Naive thymus-derived CD8-positive, alpha-beta T cell (primary cell): ENCODE measurements at regions of chr7 and their contacts with region 1.

Region 1: GRCh38 chr7:44490351-44491200 is at the start of gene NUDCD3:
- DNase-seq: peak; percentile 57 to 89 (median 82)
- ATAC-seq: peak; percentile 80 to 81
- H3K4me3 Mint-ChIP-seq: peak within 1 kb of the TSS; percentile 83 to 99 (median 94)
- H3K27ac Mint-ChIP-seq: peak within 1 kb of the TSS; percentile 89 to 100 (median 97)
- H3K4me1 Mint-ChIP-seq: peaks cover 30 to 51% (median 48%) of the 10 kb centered on the region in 4 donors
- H3K27me3 Mint-ChIP-seq: peaks cover 0 to 5% (median 2%) of the 10 kb centered on the region in 5 donors
- polyA plus RNA-seq, gene NUDCD3: 54.6 to 69.4 (median 59.6) TPM

Region 2: GRCh38 chr7:44200647-44201461 is 289.7 kb before region 1 on chr7 and contains the start of gene YKT6:
- POLR2A ChIA-PET with region 1: interaction called, 10 read pairs
- DNase-seq: peak; percentile 83 to 97 (median 92)
- ATAC-seq: peak; percentile 97 to 99
- H3K4me3 Mint-ChIP-seq: peak within 1 kb of the TSS; percentile 78 to 92 (median 84)
- H3K27ac Mint-ChIP-seq: peak within 1 kb of the TSS; percentile 23 to 91 (median 76)
- H3K4me1 Mint-ChIP-seq: peaks cover 22 to 38% (median 28%) of the 10 kb centered on the region in 4 donors
- H3K27me3 Mint-ChIP-seq: peaks cover 0 to 5% (median 0%) of the 10 kb centered on the region in 5 donors
- polyA plus RNA-seq, gene YKT6: 31.6 to 37.0 (median 34.2) TPM

Region 3: GRCh38 chr7:44257618-44258422 is 232.8 kb before region 1 on chr7:
- POLR2A ChIA-PET with region 1: interaction called, 16 read pairs
- DNase-seq: peak; percentile 12 to 75 (median 60)
- ATAC-seq: peak; percentile 90 to 92
- H3K4me3 Mint-ChIP-seq: peak overlapping the region; percentile 49 to 85 (median 72)
- H3K27ac Mint-ChIP-seq: peak overlapping the region; percentile 77 to 97 (median 96)
- H3K4me1 Mint-ChIP-seq: peaks cover 21 to 38% (median 31%) of the 10 kb centered on the region in 4 donors
- H3K27me3 Mint-ChIP-seq: no peaks in the 10 kb centered on the region

Region 4: DNA sequence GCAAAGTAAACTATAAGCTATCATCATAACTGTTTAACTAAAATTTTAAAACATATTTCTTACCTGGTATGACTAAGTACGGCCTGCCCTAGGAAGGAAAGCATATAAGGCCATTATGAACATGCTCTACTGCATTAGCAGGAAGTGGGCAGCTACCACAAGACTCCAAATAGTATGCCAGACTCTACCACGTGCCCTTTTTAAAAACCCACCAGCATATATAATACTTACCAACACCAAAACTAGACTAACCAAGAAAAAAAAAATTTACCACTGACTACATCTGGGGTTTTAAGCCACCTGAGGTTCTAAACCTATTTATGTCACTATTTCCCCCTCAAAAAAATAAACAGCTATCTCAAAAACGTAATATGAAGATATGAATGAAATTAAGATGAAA is 30.3 kb before region 1 on chr7:
- POLR2A ChIA-PET with region 1: interaction called, 37 read pairs
- DNase-seq: peak; percentile 26 to 93 (median 71)
- ATAC-seq: peak; percentile 99
- H3K4me3 Mint-ChIP-seq: peak overlapping the region; percentile 36 to 79 (median 71)
- H3K27ac Mint-ChIP-seq: peak overlapping the region; percentile 5 to 98 (median 87)
- H3K4me1 Mint-ChIP-seq: peaks cover 29 to 83% (median 81%) of the 10 kb centered on the region in 4 donors
- H3K27me3 Mint-ChIP-seq: no peaks in the 10 kb centered on the region

Region 5: DNA sequence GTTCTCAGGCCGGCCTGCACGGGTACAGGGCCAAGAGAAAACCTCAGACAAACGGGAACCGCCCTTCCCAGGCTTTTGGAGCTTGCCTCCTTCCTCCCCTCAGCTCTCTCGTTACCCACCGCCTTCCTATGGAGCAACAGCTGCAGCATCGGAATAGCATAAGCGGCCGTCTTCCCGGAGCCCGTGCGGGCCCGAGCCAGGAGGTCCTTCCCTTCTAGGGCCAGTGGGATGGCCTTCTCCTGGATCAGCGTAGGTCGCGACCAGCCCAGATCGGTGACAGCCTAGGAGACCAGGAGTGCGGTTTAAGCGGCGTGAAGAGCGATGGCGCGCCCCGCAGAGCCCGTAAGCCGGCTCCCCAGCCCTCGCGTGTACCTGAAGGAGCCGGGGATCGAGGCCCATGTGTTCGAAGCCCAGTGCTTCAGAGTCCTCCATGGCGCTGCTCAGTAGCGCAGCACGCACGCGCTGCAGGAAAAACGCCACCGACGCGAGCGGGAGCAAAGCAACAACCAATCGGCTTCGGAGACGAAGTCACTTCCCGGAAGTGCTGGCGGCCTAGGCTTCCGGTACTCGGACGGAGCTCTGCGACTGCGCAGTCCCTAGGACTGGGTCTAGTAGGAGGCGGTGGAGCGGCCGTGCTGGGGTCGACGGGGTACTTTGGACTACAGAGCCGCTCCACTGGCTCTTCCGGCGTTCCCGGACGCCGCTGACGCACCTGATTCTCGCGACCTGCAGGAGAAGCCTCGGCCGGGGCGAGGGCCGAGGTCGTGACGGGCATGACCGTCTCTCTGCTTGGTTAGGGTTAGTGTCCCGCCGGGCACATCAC is 83.1 kb after region 1 on chr7 and contains the start of gene DDX56:
- POLR2A ChIA-PET with region 1: interaction called, 31 read pairs
- DNase-seq: peak; percentile 82 to 96 (median 89)
- ATAC-seq: peak; percentile 96 to 98
- H3K4me3 Mint-ChIP-seq: peak within 1 kb of the TSS; percentile 90 to 97 (median 96)
- H3K27ac Mint-ChIP-seq: peak within 1 kb of the TSS; percentile 96 to 99 (median 98)
- H3K4me1 Mint-ChIP-seq: peaks cover 21 to 49% (median 34%) of the 10 kb centered on the region in 4 donors
- H3K27me3 Mint-ChIP-seq: no peaks in the 10 kb centered on the region
- polyA plus RNA-seq, gene DDX56: 25.3 to 48.2 (median 41.1) TPM

Region 6: GRCh38 chr7:44581879-44582603 is 91.5 kb after region 1 on chr7 and contains the start of gene TMED4:
- POLR2A ChIA-PET with region 1: interaction called, 21 read pairs
- DNase-seq: peak; percentile 99 to 100 (median 100)
- ATAC-seq: peak; percentile 84 to 85
- H3K4me3 Mint-ChIP-seq: peak within 1 kb of the TSS; percentile 87 to 93 (median 91)
- H3K27ac Mint-ChIP-seq: peak within 1 kb of the TSS; percentile 91 to 99 (median 98)
- H3K4me1 Mint-ChIP-seq: peaks cover 14 to 37% (median 35%) of the 10 kb centered on the region in 4 donors
- H3K27me3 Mint-ChIP-seq: peaks cover 0 to 3% (median 0%) of the 10 kb centered on the region in 5 donors
- polyA plus RNA-seq, gene TMED4: 61.4 to 80.4 (median 71.8) TPM

Region 7: GRCh38 chr7:44847508-44847920 is 356.9 kb after region 1 on chr7:
- POLR2A ChIA-PET with region 1: interaction called, 16 read pairs
- DNase-seq: peak; percentile 78 to 94 (median 88)
- ATAC-seq: peak; percentile 63 to 65
- H3K4me3 Mint-ChIP-seq: peak overlapping the region; percentile 87 to 98 (median 94)
- H3K27ac Mint-ChIP-seq: peak overlapping the region; percentile 94 to 99 (median 98)
- H3K4me1 Mint-ChIP-seq: peaks cover 16 to 48% (median 37%) of the 10 kb centered on the region in 4 donors
- H3K27me3 Mint-ChIP-seq: peaks cover 0 to 3% (median 0%) of the 10 kb centered on the region in 5 donors